GM12878 (cell line): ENCODE measurements at regions of chr18 and their contacts with region 1.

Region 1: GRCh38 chr18:64017870-64018269 is 48.0 kb downstream of the SERPINB8 start:
- DNase-seq: no peak
- ATAC-seq: peak; percentile 68
- H3K4me3 ChIP-seq: no peak overlapping the region
- H3K27ac ChIP-seq: no peak overlapping the region
- H3K4me1 ChIP-seq: no peaks in the 10 kb centered on the region
- H3K27me3 ChIP-seq: no peaks in the 10 kb centered on the region; a peak in 1 of 4 replicates
- CTCF ChIP-seq: peak; percentile 32 to 60 (median 45); a peak in 5 of 6 replicates
- EP300 ChIP-seq: no peak
- POLR2A ChIP-seq: no peak
- RAD21 ChIP-seq: peak; percentile 78

Region 2: GRCh38 chr18:63987743-63988142 is 30.1 kb before region 1 on chr18:
- CTCF ChIA-PET with region 1: no interaction called
- POLR2A ChIA-PET with region 1: no interaction called
- RAD21 ChIA-PET with region 1: no interaction called
- SMC1A ChIA-PET with region 1: no interaction called
- in situ Hi-C with region 1: no loop called
- intact Hi-C with region 1: no loop called
- DNase-seq: no peak
- ATAC-seq: no peak; the same call in 2 of the 3 replicates
- H3K4me3 ChIP-seq: no peak overlapping the region
- H3K27ac ChIP-seq: no peak overlapping the region
- H3K4me1 ChIP-seq: no peaks in the 10 kb centered on the region
- H3K27me3 ChIP-seq: no peaks in the 10 kb centered on the region
- CTCF ChIP-seq: no peak
- EP300 ChIP-seq: no peak
- POLR2A ChIP-seq: no peak
- RAD21 ChIP-seq: no peak

Region 3: DNA sequence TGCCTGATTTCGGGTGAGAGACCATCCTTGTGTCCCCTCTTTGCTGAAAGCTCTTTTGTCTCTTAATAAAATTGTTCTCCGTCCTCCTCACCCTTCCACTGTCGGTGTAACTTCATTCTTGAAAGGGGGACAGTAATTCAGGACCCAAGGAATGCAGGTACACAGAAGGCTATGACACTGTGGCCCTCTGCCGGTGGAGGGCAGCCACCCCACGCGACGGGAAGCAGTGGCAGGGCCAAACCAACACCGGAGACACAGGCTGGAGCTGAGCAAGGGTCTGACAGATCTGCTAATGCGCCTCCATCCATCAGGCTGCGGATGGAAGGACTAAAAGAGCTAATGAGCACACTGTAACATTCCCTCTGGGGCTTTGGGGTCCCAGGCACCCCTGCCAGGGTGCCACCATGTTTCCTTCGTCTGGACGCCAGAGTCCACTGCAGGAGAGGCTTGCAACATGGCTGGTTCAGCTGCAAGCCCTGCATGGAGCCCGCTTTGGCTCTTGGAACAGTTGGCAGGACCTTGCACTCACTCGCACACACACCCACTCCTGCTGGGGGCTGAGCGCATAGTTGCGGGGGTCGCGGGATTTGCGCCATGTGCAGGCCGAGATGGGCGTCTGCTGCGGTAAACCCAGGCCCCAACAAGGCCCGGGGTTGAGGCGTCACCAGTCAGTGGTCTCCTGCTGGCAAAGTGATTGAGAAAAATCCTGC is 1188.8 kb after region 1 on chr18:
- CTCF ChIA-PET with region 1: no interaction called
- POLR2A ChIA-PET with region 1: no interaction called
- RAD21 ChIA-PET with region 1: no interaction called
- SMC1A ChIA-PET with region 1: no interaction called
- in situ Hi-C with region 1: no loop called
- intact Hi-C with region 1: loop called (anchors 5 kb)
- DNase-seq: no peak
- ATAC-seq: peak; percentile 83
- H3K4me3 ChIP-seq: no peak overlapping the region
- H3K27ac ChIP-seq: no peak overlapping the region
- H3K4me1 ChIP-seq: no peaks in the 10 kb centered on the region
- H3K27me3 ChIP-seq: no peaks in the 10 kb centered on the region; a peak in 1 of 4 replicates
- CTCF ChIP-seq: peak in 2 of 3 experiments; percentile 29 to 41; a peak in 3 of 6 replicates
- EP300 ChIP-seq: no peak
- POLR2A ChIP-seq: no peak
- RAD21 ChIP-seq: no peak